ENCODE measurements at regions of chr7 and their contacts with region 1.

Region 1: DNA sequence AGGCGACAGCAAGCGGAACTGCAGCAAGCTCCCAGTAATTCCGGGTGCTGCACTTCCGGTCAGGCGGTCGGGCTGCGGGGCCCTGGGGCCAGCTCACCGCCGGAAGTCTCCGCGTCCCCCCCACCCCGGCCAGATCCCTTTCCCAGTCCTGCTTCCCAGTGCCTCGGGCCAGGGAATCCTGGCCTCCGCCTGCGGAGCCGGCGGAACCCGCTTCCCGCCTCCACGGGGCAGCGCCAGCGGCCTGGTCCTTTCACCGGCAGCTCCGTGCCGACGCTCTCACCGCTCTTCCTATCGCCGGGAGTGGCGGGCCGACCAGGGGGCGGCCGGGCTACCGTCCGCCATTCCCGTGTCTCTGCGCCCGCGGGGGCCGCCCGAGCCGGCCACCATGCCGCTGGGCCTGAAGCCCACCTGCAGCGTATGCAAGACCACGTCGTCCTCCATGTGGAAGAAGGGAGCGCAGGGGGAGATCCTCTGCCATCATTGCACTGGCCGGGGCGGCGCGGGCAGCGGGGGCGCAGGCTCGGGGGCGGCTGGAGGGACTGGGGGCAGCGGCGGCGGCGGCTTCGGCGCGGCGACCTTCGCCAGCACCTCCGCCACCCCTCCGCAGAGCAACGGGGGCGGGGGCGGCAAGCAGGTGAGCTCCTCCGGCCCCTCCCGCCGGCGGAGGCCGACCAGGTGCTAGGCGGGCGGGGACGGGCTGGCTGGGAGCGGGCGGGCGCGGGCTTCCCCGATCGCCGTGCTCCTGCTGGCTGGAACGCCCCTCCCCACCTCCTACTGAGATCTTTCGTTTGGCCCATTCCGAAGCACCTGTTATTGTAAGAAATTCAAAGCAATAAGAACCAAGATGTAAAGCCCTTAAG is at the start of gene GATAD1:
- DNase-seq: peak in 7 of 9 donors; percentile 64 to 87 (median 84)
- ATAC-seq: peak; percentile 89
- H3K4me3 ChIP-seq: peak within 1 kb of the TSS; percentile 63
- H3K4me3 Mint-ChIP-seq: peak within 1 kb of the TSS; percentile 81 to 97 (median 93)
- H3K27ac ChIP-seq: peak within 1 kb of the TSS; percentile 95
- H3K27ac Mint-ChIP-seq: peak within 1 kb of the TSS; percentile 95 to 99 (median 98)
- H3K4me1 ChIP-seq: peaks cover 9 to 14% of the 10 kb centered on the region in 2 donors
- H3K4me1 Mint-ChIP-seq: peaks cover 6 to 38% (median 17%) of the 10 kb centered on the region in 7 donors
- H3K27me3 ChIP-seq: no peaks in the 10 kb centered on the region
- H3K27me3 Mint-ChIP-seq: peaks cover 0 to 3% (median 0%) of the 10 kb centered on the region in 5 donors
- total RNA-seq, gene GATAD1: 16.4 to 34.7 (median 22.7) TPM

Region 2: GRCh38 chr7:90455163-90456030 is 1992.2 kb before region 1 on chr7:
- CTCF ChIA-PET with region 1: no interaction called
- POLR2A ChIA-PET with region 1: no interaction called
- intact Hi-C with region 1: loop called in 1 of 2 experiments (anchors 2 kb)
- DNase-seq: peak in 5 of 9 donors; percentile 32 to 49 (median 40)
- ATAC-seq: peak; percentile 77
- H3K4me3 ChIP-seq: no peak overlapping the region
- H3K4me3 Mint-ChIP-seq: peak overlapping the region in 7 of 10 donors; percentile 37 to 70 (median 56)
- H3K27ac ChIP-seq: no peak overlapping the region
- H3K27ac Mint-ChIP-seq: no peak overlapping the region
- H3K4me1 ChIP-seq: no peaks in the 10 kb centered on the region
- H3K4me1 Mint-ChIP-seq: peaks cover 5 to 8% (median 6%) of the 10 kb centered on the region in 7 donors
- H3K27me3 ChIP-seq: no peaks in the 10 kb centered on the region
- H3K27me3 Mint-ChIP-seq: peaks cover 0 to 22% (median 10%) of the 10 kb centered on the region in 5 donors

Region 3: DNA sequence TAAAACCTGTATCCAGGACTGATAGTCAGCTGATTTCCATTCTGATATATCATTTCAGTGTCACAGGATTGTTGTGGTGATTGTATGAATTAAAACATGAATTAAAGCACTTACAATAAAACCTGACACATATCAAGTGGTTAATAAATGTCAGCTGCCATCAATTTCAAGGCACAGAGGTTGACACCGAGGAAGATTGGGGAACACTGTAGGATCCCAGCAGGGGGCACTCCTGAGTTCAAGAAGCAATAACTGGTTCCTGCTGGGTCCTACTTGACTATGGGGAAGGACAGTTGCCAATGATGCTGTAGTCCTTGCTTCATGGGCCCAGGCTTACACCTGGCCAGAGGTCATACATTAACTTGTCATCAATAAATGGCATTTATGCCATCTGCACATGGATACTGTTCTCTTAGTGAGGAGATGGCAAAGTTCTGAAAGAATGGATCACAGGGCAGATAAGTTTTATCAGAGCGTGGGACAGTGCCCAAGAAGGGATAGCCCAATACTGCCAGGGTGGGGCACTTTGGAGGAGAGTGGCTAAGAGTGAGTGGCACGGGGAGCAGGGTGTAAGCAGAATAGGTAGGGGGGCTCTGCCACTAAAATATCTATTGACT is 1159.3 kb before region 1 on chr7:
- CTCF ChIA-PET with region 1: no interaction called
- POLR2A ChIA-PET with region 1: no interaction called
- intact Hi-C with region 1: loop called in 1 of 2 experiments (anchors 5 kb)
- DNase-seq: no peak
- ATAC-seq: peak; percentile 48
- H3K4me3 ChIP-seq: no peak overlapping the region
- H3K4me3 Mint-ChIP-seq: no peak overlapping the region
- H3K27ac ChIP-seq: no peak overlapping the region
- H3K27ac Mint-ChIP-seq: no peak overlapping the region
- H3K4me1 ChIP-seq: no peaks in the 10 kb centered on the region
- H3K4me1 Mint-ChIP-seq: peaks cover 0 to 2% (median 0%) of the 10 kb centered on the region in 7 donors
- H3K27me3 ChIP-seq: no peaks in the 10 kb centered on the region
- H3K27me3 Mint-ChIP-seq: peaks cover 3 to 19% (median 8%) of the 10 kb centered on the region in 5 donors

Region 4: DNA sequence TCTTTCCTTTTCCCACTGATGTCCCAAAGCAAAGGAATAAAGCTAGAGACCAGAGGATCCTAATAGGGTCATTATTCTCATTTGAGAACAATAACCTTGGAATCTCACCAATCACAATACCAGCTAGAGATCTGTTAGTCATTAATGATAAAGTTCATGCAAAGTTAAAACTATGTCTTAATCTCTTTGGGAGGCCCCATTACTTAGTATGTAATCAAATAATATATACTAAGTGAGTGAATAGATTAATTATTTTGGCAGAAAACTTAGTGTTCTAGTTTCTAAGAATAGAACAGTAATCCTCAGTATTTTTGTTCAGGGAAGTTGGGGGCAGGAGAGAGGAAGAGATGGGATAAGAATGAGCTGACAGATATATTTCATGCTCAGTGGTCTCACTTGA is 794.3 kb before region 1 on chr7:
- CTCF ChIA-PET with region 1: no interaction called
- POLR2A ChIA-PET with region 1: no interaction called
- intact Hi-C with region 1: no loop called
- DNase-seq: no peak
- ATAC-seq: no peak
- H3K4me3 ChIP-seq: no peak overlapping the region
- H3K4me3 Mint-ChIP-seq: no peak overlapping the region
- H3K27ac ChIP-seq: no peak overlapping the region
- H3K27ac Mint-ChIP-seq: no peak overlapping the region
- H3K4me1 ChIP-seq: no peaks in the 10 kb centered on the region
- H3K4me1 Mint-ChIP-seq: no peaks in the 10 kb centered on the region
- H3K27me3 ChIP-seq: no peaks in the 10 kb centered on the region
- H3K27me3 Mint-ChIP-seq: peaks cover 0 to 16% (median 0%) of the 10 kb centered on the region in 5 donors

Region 5: DNA sequence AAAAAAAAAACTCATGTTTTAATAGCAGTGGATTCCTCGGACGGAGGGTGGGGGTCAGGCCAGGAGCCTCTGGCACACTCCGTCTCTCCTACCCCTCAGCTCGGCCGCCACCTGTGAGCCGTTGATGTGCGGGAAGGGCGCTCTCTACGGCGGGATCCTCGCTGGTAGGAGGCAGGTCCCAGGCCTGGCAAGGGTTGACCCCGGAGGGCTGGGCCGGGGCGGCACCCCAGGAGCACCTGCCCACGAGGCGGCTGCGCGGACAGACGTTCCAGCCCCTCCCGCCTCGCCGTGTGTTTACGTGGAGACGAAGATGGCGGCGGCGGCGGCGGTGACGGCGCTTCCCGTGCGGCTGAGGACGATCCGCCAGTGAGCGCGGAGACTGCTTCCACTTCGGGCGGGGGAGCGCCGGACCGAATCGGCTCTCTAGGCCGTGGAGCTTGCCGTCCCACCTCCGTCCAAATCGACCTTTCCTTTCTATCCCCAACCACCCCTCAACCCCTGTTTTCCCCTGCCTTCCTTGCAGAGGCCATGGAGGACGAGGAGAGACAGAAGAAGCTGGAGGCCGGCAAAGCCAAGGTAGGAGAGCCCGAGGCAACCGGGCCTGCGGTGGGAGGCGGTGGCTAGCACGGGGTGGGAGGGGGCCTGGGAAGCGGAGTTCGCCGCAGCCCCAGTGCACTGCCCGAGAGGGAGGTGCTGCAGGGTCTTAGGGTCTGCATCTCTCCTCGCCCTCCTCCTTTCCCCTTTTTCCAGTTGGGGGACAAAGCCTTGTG is 506.8 kb before region 1 on chr7 and contains the start of gene AKAP9:
- CTCF ChIA-PET with region 1: no interaction called
- POLR2A ChIA-PET with region 1: interaction called, 9 read pairs
- intact Hi-C with region 1: loop called (anchors 1 to 2 kb)
- DNase-seq: peak; percentile 79 to 89 (median 88)
- ATAC-seq: peak; percentile 93
- H3K4me3 ChIP-seq: peak within 1 kb of the TSS; percentile 97
- H3K4me3 Mint-ChIP-seq: peak within 1 kb of the TSS; percentile 85 to 98 (median 92)
- H3K27ac ChIP-seq: peak within 1 kb of the TSS; percentile 93
- H3K27ac Mint-ChIP-seq: peak within 1 kb of the TSS; percentile 90 to 98 (median 95)
- H3K4me1 ChIP-seq: peaks cover 15 to 16% of the 10 kb centered on the region in 2 donors
- H3K4me1 Mint-ChIP-seq: peaks cover 28 to 54% (median 44%) of the 10 kb centered on the region in 7 donors
- H3K27me3 ChIP-seq: no peaks in the 10 kb centered on the region
- H3K27me3 Mint-ChIP-seq: peaks cover 0 to 2% (median 0%) of the 10 kb centered on the region in 5 donors
- total RNA-seq, gene AKAP9: 50.0 to 93.5 (median 66.1) TPM

Region 6: GRCh38 chr7:92245487-92246362 is 201.8 kb before region 1 on chr7 and contains the starts of genes ANKIB1 and KRIT1:
- CTCF ChIA-PET with region 1: interaction called, 3 read pairs
- POLR2A ChIA-PET with region 1: interaction called, 28 read pairs
- intact Hi-C with region 1: loop called (anchors 1 to 2 kb)
- DNase-seq: peak; percentile 68 to 88 (median 86)
- ATAC-seq: peak; percentile 87
- H3K4me3 ChIP-seq: peak within 1 kb of the TSS; percentile 80
- H3K4me3 Mint-ChIP-seq: peak within 1 kb of the TSS; percentile 97 to 100 (median 98)
- H3K27ac ChIP-seq: peak within 1 kb of the TSS; percentile 92
- H3K27ac Mint-ChIP-seq: peak within 1 kb of the TSS; percentile 98 to 100 (median 100)
- H3K4me1 ChIP-seq: peaks cover 15 to 22% of the 10 kb centered on the region in 2 donors
- H3K4me1 Mint-ChIP-seq: peaks cover 30 to 64% (median 45%) of the 10 kb centered on the region in 7 donors
- H3K27me3 ChIP-seq: no peaks in the 10 kb centered on the region
- H3K27me3 Mint-ChIP-seq: no peaks in the 10 kb centered on the region
- total RNA-seq, gene ANKIB1: 54.8 to 98.6 (median 68.2) TPM
- total RNA-seq, gene KRIT1: 45.7 to 78.7 (median 48.6) TPM

Region 7: DNA sequence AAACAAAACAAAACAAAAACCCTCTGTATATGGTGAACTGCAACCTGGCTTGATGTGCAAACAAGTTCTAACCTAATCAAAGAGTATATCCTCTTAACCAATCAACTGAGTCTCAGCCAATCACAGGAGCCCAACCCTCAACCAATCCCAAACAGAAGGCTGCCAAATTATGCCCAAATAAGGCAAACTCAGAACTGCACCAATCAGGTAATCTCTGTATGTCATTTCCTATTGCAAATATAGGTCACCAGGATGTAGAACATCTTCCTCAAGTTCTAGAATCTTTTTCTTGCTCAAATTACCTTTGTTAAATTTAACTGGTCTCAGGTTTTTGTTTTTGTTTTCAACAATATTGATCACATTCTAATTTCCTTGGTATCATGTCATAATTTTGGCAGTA is 137.4 kb after region 1 on chr7:
- CTCF ChIA-PET with region 1: no interaction called
- POLR2A ChIA-PET with region 1: interaction called, 3 read pairs
- intact Hi-C with region 1: loop called (anchors 1 to 5 kb)
- DNase-seq: peak in 5 of 9 donors; percentile 11 to 42 (median 23)
- ATAC-seq: peak; percentile 16
- H3K4me3 ChIP-seq: no peak overlapping the region
- H3K4me3 Mint-ChIP-seq: peak overlapping the region in 6 of 10 donors; percentile 7 to 61 (median 51)
- H3K27ac ChIP-seq: no peak overlapping the region
- H3K27ac Mint-ChIP-seq: peak overlapping the region in 5 of 9 donors; percentile 0 to 84 (median 70)
- H3K4me1 ChIP-seq: peaks cover 23 to 31% of the 10 kb centered on the region in 2 donors
- H3K4me1 Mint-ChIP-seq: peaks cover 40 to 89% (median 70%) of the 10 kb centered on the region in 7 donors
- H3K27me3 ChIP-seq: no peaks in the 10 kb centered on the region
- H3K27me3 Mint-ChIP-seq: no peaks in the 10 kb centered on the region

Region 8: GRCh38 chr7:93117852-93118530 is 670.4 kb after region 1 on chr7 and contains the start of gene SAMD9:
- CTCF ChIA-PET with region 1: no interaction called
- POLR2A ChIA-PET with region 1: interaction called, 3 read pairs
- intact Hi-C with region 1: loop called in 1 of 2 experiments (anchors 5 kb)
- DNase-seq: peak in 8 of 9 donors; percentile 28 to 85 (median 78)
- ATAC-seq: peak; percentile 99
- H3K4me3 ChIP-seq: peak within 1 kb of the TSS; percentile 52
- H3K4me3 Mint-ChIP-seq: peak within 1 kb of the TSS; percentile 78 to 97 (median 92)
- H3K27ac ChIP-seq: peak within 1 kb of the TSS; percentile 82
- H3K27ac Mint-ChIP-seq: peak within 1 kb of the TSS; percentile 85 to 98 (median 93)
- H3K4me1 ChIP-seq: peaks cover 12 to 20% of the 10 kb centered on the region in 2 donors
- H3K4me1 Mint-ChIP-seq: peaks cover 38 to 56% (median 48%) of the 10 kb centered on the region in 7 donors
- H3K27me3 ChIP-seq: no peaks in the 10 kb centered on the region
- H3K27me3 Mint-ChIP-seq: no peaks in the 10 kb centered on the region
- total RNA-seq, gene SAMD9: 20.9 to 61.6 (median 47.8) TPM

Measured in naive thymus-derived CD4-positive, alpha-beta T cell (primary cell).